A549 (cell line): ENCODE measurements at regions of chrX and their contacts with region 1.

Region 1: DNA sequence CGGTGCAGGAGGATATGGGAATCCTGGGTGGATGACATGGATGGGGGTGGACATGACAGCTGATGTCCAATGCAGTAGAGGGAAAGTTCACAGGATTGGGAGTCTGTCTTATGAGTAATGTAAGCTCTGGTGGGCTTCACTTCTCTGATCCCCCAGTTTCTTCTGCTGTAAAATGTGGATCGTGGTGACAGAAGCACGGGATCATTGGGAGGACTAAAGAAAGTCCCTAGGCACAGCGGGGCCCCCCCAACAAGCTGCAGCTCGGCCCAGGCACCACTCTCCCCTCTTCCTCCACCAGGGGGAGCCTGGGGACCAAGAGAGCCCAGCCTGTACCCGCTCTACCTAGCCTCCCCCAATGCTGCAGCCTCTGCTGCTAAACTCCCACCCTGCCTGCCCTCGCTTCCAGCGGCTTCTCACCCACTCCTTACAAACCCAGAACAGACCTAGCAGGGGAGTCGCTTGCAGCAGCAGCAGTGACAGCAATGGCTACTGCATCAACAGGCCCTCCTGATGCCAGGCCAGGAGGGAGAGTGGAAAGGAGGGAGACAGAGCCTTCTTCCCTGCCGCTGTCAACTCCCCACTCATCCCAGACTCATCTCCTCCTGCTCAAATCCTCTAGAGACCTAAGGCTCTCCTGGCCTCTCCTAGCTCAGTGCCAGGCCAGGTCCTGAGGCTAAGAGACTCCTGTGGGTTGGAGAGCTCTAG is 36.1 kb upstream of the IQSEC2 start:
- DNase-seq: peak; percentile 48 to 70
- ATAC-seq: peak; percentile 75 to 88
- H3K4me3 ChIP-seq: no peak overlapping the region
- H3K27ac ChIP-seq: no peak overlapping the region
- H3K4me1 ChIP-seq: peaks cover 10% of the 10 kb centered on the region; the same call in 2 of the 3 replicates
- CTCF ChIP-seq: peak; percentile 69
- EP300 ChIP-seq: no peak
- POLR2A ChIP-seq: no peak
- RAD21 ChIP-seq: peak; percentile 71 to 73

Region 2: DNA sequence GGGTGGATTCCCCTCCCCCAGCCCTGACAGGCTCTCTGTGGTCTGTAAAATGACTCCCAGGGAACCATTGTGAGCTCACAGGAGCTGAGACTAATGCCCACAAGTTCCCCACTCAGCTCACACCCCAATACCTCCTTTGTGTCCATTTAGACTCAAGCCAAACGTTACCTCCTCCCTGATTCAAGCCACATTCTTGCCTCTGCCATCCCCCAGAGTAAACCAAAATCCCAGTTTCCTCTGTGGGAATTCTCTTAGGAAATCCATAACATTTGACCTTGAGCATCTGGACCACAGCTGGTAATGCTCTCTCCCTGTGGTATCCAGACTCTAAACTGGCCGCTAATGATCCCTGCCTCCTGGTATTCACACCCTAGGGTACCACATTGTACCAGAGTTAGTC is 66.2 kb before region 1 on chrX:
- CTCF ChIA-PET with region 1: interaction called, 11 read pairs
- POLR2A ChIA-PET with region 1: no interaction called
- DNase-seq: no peak
- ATAC-seq: no peak
- H3K4me3 ChIP-seq: no peak overlapping the region
- H3K27ac ChIP-seq: peak overlapping the region in 1 of 2 experiments; percentile 67; a peak in 1 of 6 replicates
- H3K4me1 ChIP-seq: peaks cover 15% of the 10 kb centered on the region; the same call in 2 of the 3 replicates
- CTCF ChIP-seq: no peak
- EP300 ChIP-seq: no peak
- POLR2A ChIP-seq: no peak
- RAD21 ChIP-seq: no peak

Region 3: DNA sequence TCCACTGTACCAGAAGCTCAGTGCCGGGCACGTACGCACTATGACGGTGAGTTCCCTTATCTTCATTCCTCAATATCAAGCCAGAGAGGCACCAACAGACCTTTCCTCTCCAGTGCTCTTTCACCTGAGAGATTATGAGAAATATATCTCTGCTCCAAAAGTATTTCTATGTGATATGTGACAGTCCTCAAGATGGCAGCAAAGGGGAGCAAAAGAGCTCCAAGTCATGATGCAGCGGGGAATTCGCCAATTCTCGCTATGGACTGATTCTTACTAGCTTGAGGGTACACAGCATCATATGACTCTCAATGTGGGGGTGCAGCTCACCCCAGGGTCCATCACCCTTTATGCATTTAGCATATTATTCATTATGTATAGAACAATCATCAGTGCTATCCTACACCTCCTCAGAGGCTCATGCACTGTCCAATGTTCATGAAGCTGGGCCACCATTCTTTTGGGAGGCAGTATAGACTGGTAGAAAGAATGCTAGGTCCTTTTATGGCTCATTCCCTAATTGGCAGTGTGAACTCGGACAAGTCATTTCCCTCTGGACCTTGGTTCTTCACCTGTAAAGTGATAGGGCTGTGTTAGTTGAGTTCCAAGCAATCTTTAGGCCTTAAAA is 23.4 kb before region 1 on chrX:
- CTCF ChIA-PET with region 1: interaction called, 170 read pairs
- POLR2A ChIA-PET with region 1: no interaction called
- DNase-seq: peak in 1 of 2 experiments; percentile 32
- ATAC-seq: peak; percentile 39 to 69; a peak in 3 of 6 replicates
- H3K4me3 ChIP-seq: no peak overlapping the region
- H3K27ac ChIP-seq: no peak overlapping the region
- H3K4me1 ChIP-seq: no peaks in the 10 kb centered on the region
- CTCF ChIP-seq: peak; percentile 50
- EP300 ChIP-seq: no peak
- POLR2A ChIP-seq: no peak
- RAD21 ChIP-seq: peak; percentile 39 to 53; a peak in 3 of 5 replicates

Region 4: DNA sequence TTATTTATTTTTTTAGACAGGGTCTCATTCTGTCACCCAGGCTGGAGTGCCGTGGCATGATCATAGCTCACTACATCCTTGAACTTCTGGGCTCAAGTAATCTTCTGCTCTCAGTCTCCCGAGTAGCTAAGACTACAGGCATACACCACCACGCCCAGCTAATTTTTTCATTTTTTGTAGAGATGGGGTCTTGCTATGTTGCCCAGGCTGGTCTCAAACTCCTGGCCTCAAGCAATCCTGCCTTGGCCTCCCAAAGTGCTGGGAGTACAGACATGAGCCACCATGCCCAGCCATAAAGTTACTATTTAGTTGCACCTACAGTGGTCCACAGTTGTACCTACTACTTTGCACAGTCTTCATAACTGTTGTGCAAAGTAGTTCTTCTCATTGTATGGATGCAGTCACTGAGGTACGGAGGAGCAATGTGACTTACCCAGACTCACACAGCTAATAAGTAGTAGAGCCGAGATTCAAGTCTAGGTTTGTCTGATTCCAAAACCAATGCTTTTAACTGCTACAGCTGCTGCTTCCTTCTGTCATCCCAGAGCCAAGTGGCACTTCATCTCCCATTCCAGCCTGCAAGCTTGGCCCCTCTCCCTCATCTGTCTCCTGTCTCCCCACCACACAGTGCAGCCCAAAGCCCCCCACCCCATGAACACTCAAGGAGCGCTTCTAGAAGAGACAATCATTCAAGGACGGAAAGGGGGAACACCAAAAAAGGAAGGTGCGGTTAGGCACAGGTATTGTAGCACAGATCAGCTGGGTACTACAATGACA is 12.1 kb before region 1 on chrX:
- CTCF ChIA-PET with region 1: interaction called, 37 read pairs
- POLR2A ChIA-PET with region 1: no interaction called
- DNase-seq: no peak
- ATAC-seq: no peak
- H3K4me3 ChIP-seq: no peak overlapping the region
- H3K27ac ChIP-seq: no peak overlapping the region
- H3K4me1 ChIP-seq: peaks cover 5% of the 10 kb centered on the region; the same call in 1 of the 3 replicates
- CTCF ChIP-seq: no peak
- EP300 ChIP-seq: no peak
- POLR2A ChIP-seq: no peak
- RAD21 ChIP-seq: no peak

Region 5: GRCh38 chrX:53340852-53341607 is 23.5 kb after region 1 on chrX:
- CTCF ChIA-PET with region 1: interaction called, 18 read pairs
- POLR2A ChIA-PET with region 1: no interaction called
- DNase-seq: no peak
- ATAC-seq: no peak
- H3K4me3 ChIP-seq: no peak overlapping the region
- H3K27ac ChIP-seq: no peak overlapping the region
- H3K4me1 ChIP-seq: no peaks in the 10 kb centered on the region
- CTCF ChIP-seq: no peak
- EP300 ChIP-seq: no peak
- POLR2A ChIP-seq: no peak
- RAD21 ChIP-seq: no peak

Region 6: DNA sequence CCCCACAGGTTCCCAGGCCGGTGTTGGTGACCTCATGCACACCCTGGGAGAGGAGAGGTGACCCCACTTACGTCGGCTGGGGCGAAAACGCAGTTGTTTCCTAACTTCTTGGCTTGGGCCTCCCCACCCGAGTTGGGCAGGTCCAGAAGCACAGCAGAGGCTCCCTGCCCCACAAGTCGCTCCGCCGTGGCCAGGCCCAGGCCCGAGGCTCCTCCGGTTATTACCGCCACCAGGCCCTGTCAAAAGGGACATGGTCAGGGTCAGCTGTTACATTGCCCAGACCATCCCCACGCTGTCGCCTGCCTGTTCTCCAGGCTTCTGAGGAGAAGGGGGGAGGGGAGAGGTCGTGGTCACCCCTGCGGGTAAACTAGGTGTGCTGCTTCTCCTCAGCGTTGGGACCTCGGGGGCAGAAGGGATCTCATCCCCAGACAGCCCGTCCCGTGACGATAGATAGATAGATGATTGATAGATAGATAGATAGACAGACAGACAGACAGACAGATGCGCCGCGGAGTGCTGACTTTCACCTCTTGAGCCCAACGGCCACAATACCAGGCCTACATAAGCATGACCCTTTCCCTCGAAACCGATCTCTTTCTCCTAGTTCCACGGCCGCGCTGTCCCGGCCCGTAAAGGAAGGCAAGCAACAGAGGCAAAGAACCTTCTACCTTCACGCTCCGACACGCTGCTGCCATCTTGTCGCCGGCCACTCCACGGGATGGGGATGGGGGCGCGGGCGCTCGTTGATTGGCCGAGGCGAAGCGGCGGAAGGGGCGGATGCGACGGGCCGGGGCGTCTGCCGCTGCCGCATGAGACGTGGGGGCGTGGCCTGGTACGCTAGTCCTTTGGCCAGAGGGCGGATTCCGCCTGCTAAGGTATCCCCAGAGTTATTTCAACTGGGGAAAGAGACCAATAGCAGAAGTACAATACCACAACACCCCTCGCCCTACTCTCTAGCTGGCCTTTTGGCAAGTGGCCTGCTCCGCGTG is 116.4 kb after region 1 on chrX and contains the start of gene HSD17B10:
- CTCF ChIA-PET with region 1: interaction called, 36 read pairs
- POLR2A ChIA-PET with region 1: no interaction called
- DNase-seq: peak; percentile 84 to 85
- ATAC-seq: peak; percentile 96 to 99
- H3K4me3 ChIP-seq: peak within 1 kb of the TSS; percentile 95
- H3K27ac ChIP-seq: peak within 1 kb of the TSS; percentile 89 to 92
- H3K4me1 ChIP-seq: peaks cover 5% of the 10 kb centered on the region; the same call in 1 of the 3 replicates
- CTCF ChIP-seq: no peak
- EP300 ChIP-seq: no peak
- POLR2A ChIP-seq: peak; percentile 81
- RAD21 ChIP-seq: no peak
- polyA plus RNA-seq, gene HSD17B10: 139 and 155 TPM in 2 replicates

Region 7: DNA sequence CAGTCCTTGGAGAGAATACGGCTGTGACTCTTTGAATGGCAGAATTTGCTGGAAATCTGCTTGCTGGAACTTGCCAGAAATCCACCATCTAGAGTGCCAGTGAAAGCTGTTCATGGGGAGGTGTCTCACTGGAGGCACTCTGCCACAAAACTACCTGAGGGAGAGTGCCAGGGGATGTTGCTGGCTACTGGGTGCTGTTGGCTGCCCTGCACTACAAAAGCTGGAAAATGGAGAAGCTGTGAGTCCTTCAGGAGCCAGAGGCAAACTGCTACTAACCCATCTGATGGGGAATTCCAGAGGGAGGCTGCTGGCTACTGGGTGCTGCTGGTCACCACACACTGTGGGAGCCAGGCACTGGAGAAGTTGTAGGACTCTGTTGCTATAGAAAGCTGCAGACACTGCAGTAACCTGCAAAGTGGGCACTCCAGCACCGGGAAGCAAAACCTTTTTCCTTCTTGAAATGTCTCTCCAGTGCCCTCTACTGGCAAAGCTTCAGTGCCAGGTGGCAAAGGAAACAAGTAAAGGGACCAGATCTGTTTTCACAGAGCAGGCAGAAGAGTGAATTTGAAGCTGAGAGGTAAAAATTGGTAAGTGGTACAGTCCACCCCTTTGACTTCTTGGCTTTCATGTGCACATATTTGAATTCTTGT is 164.4 kb after region 1 on chrX:
- CTCF ChIA-PET with region 1: interaction called, 68 read pairs
- POLR2A ChIA-PET with region 1: no interaction called
- DNase-seq: peak; percentile 73 to 78
- ATAC-seq: peak; percentile 92 to 93
- H3K4me3 ChIP-seq: no peak overlapping the region
- H3K27ac ChIP-seq: no peak overlapping the region
- H3K4me1 ChIP-seq: peaks cover 10% of the 10 kb centered on the region
- CTCF ChIP-seq: peak; percentile 65
- EP300 ChIP-seq: no peak
- POLR2A ChIP-seq: no peak
- RAD21 ChIP-seq: peak; percentile 66 to 75